Spleen (tissue), 13 donors: ENCODE measurements at regions of chr2 and their contacts with region 1.

Region 1: GRCh38 chr2:42859006-42859552 is 66.7 kb upstream of the HAAO start:
- DNase-seq: no peak
- H3K4me3 ChIP-seq: no peak overlapping the region
- H3K27ac ChIP-seq: no peak overlapping the region
- H3K4me1 ChIP-seq: peaks cover 0 to 16% (median 0%) of the 10 kb centered on the region in 6 donors
- H3K27me3 ChIP-seq: no peaks in the 10 kb centered on the region
- CTCF ChIP-seq: peak; percentile 79 to 96 (median 92)
- POLR2A ChIP-seq: no peak

Region 2: GRCh38 chr2:42614838-42615237 is 244.2 kb before region 1 on chr2:
- intact Hi-C with region 1: no loop called
- DNase-seq: no peak
- H3K4me3 ChIP-seq: no peak overlapping the region
- H3K27ac ChIP-seq: no peak overlapping the region
- H3K4me1 ChIP-seq: no peaks in the 10 kb centered on the region
- H3K27me3 ChIP-seq: no peaks in the 10 kb centered on the region
- CTCF ChIP-seq: no peak
- POLR2A ChIP-seq: no peak

Region 3: DNA sequence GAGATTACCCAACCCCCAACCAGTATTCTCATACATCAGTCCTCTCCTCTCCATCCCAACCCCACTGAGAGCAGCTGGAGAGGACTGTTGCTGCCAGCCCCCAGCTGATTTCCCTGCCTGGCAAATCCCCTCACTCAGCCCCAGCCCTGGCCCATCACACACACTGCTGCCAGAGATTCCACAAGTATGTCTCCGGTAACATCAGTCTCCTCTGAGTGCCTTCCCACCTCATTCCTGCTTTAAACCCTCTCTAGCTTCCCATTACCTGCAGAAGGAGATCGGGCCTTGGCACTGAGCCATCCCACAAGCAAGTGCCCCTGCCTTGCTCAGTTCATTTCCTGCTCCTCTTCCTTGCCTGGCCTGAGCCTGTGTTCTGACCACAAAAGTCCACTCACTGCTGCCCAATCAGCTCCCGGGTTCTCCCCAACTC is 417.9 kb after region 1 on chr2:
- intact Hi-C with region 1: no loop called
- DNase-seq: no peak
- H3K4me3 ChIP-seq: no peak overlapping the region
- H3K27ac ChIP-seq: peak overlapping the region; percentile 57 to 83 (median 72)
- H3K4me1 ChIP-seq: peaks cover 16 to 50% (median 30%) of the 10 kb centered on the region in 6 donors
- H3K27me3 ChIP-seq: no peaks in the 10 kb centered on the region
- CTCF ChIP-seq: no peak
- POLR2A ChIP-seq: no peak

Region 4: DNA sequence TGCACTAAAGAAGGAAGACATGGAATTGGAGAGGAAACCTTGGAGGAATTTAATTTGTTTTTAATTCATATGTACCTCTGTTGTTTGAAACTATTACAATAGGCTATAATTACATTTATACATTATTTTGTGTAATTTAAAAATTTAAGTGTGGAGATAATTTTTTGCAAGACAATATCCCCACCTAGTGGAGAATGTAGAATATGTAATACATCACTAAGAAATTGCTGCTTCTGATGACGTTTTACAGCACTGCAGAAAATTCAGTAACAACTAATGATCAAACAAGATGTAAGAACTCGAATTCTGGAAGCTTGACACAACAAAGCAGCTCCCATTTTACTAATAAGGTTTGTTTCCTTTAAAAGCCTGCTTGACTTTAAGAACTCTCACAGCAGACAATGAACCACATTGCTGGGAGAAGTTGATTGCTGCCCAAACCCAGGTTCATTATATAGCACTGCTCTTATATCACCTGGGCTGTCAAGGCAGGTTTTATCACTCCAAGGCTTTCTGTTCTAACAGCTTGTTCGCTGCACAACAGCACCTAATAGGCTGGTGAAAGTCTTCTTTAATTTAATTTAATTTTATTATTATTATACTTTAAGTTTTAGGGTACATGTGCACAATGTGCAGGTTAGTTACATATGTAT is 683.3 kb after region 1 on chr2:
- intact Hi-C with region 1: loop called (anchors 10 kb)
- DNase-seq: no peak
- H3K4me3 ChIP-seq: no peak overlapping the region
- H3K27ac ChIP-seq: peak overlapping the region in 1 of 8 donors; percentile 75
- H3K4me1 ChIP-seq: peaks cover 3 to 52% (median 32%) of the 10 kb centered on the region in 6 donors
- H3K27me3 ChIP-seq: no peaks in the 10 kb centered on the region
- CTCF ChIP-seq: peak; percentile 46 to 79 (median 71)
- POLR2A ChIP-seq: no peak